Activated naive CD4-positive, alpha-beta T cell treated with anti-CD3 and anti-CD28 coated beads for 36 hours (primary cell): ENCODE measurements at regions of chr11 and their contacts with region 1.

Region 1: DNA sequence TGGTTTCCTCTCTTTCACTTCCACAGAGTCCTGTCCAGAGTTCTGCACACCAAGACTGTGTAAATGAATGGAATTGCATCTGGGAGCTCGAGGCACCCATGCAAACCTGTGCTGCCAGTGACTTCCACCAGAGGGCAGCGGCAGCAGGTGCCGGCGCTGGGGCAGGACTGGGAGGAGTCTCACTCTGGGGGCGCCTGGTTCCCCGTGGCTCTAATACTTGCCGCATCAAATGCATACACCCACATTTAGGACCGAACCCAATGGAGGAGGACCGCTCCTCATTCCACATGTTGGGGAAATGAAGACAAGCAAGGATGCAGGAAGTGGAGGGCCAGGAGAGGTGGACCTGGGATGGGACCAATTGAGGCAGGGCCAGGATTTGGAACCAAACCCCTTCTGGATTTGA is 1.1 kb upstream of the CD6 start:
- DNase-seq: peak; percentile 90
- H3K4me3 Mint-ChIP-seq: peak overlapping the region; percentile 89
- H3K27ac Mint-ChIP-seq: peak overlapping the region; percentile 97
- H3K4me1 Mint-ChIP-seq: peaks cover 15% of the 10 kb centered on the region
- H3K27me3 Mint-ChIP-seq: no peaks in the 10 kb centered on the region

Region 2: GRCh38 chr11:60913793-60914632 is 56.4 kb before region 1 on chr11 and contains the start of gene TMEM109:
- CTCF ChIA-PET with region 1: interaction called, 5 read pairs
- intact Hi-C with region 1: loop called (anchors 1 kb)
- DNase-seq: peak; percentile 89
- H3K4me3 Mint-ChIP-seq: peak within 1 kb of the TSS; percentile 94
- H3K27ac Mint-ChIP-seq: peak within 1 kb of the TSS; percentile 95
- H3K4me1 Mint-ChIP-seq: peaks cover 62% of the 10 kb centered on the region
- H3K27me3 Mint-ChIP-seq: no peaks in the 10 kb centered on the region
- total RNA-seq, gene TMEM109: 94.0 to 103 TPM

Region 3: GRCh38 chr11:61004180-61004611 is 33.8 kb after region 1 on chr11:
- CTCF ChIA-PET with region 1: interaction called, 28 read pairs
- intact Hi-C with region 1: no loop called
- DNase-seq: peak; percentile 78
- H3K4me3 Mint-ChIP-seq: peak overlapping the region; percentile 66
- H3K27ac Mint-ChIP-seq: peak overlapping the region; percentile 95
- H3K4me1 Mint-ChIP-seq: peaks cover 91% of the 10 kb centered on the region
- H3K27me3 Mint-ChIP-seq: no peaks in the 10 kb centered on the region

Region 4: DNA sequence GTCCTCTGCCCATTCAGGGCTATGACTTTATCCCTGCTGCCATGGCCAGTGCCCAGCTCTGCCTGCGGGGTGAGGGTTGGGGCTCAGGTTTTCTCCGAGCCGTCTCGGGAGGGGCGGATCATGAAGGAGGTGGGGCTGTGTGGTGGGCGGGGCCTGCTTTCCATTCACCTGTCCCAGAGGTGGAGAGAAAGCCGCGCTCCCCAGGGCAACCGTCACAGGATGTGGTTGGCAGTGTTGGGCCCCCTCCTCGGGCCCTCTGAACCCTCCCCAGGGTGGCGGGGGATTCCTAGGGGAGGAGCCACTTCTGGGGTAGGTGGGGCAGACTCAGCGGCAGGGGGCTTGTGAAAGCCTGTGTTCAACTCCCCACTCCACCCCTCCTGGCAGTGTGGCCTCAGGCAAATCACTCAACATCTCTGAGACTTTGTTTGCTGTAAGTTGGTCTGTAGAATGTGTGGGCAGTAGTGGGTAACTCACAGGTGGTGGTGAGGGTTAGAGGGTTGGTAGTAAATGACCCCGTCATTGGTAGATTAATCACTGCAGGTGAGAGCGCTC is 51.4 kb after region 1 on chr11:
- CTCF ChIA-PET with region 1: interaction called, 4 read pairs
- intact Hi-C with region 1: loop called (anchors 1 kb)
- DNase-seq: peak; percentile 97
- H3K4me3 Mint-ChIP-seq: peak overlapping the region; percentile 81
- H3K27ac Mint-ChIP-seq: peak overlapping the region; percentile 100
- H3K4me1 Mint-ChIP-seq: peaks cover 78% of the 10 kb centered on the region
- H3K27me3 Mint-ChIP-seq: no peaks in the 10 kb centered on the region

Region 5: GRCh38 chr11:61083601-61084147 is 113.3 kb after region 1 on chr11:
- CTCF ChIA-PET with region 1: interaction called, 19 read pairs
- intact Hi-C with region 1: loop called (anchors 2 kb)
- DNase-seq: peak; percentile 89
- H3K4me3 Mint-ChIP-seq: peak overlapping the region; percentile 76
- H3K27ac Mint-ChIP-seq: peak overlapping the region; percentile 99
- H3K4me1 Mint-ChIP-seq: peaks cover 70% of the 10 kb centered on the region
- H3K27me3 Mint-ChIP-seq: no peaks in the 10 kb centered on the region

Region 6: GRCh38 chr11:61161190-61162091 is 191.1 kb after region 1 on chr11 and contains the start of gene VPS37C:
- CTCF ChIA-PET with region 1: no interaction called
- intact Hi-C with region 1: loop called (anchors 1 kb)
- DNase-seq: peak; percentile 91
- H3K4me3 Mint-ChIP-seq: peak within 1 kb of the TSS; percentile 94
- H3K27ac Mint-ChIP-seq: peak within 1 kb of the TSS; percentile 93
- H3K4me1 Mint-ChIP-seq: peaks cover 62% of the 10 kb centered on the region
- H3K27me3 Mint-ChIP-seq: no peaks in the 10 kb centered on the region
- total RNA-seq, gene VPS37C: 8.5 to 8.9 TPM